Activated naive CD8-positive, alpha-beta T cell treated with anti-CD3 and anti-CD28 coated beads, Interleukin-2, amount 10 ng/mL, durations not matched to agents 7 days and 5 days (primary cell): ENCODE measurements at regions of chr4 and their contacts with region 1.

Region 1: DNA sequence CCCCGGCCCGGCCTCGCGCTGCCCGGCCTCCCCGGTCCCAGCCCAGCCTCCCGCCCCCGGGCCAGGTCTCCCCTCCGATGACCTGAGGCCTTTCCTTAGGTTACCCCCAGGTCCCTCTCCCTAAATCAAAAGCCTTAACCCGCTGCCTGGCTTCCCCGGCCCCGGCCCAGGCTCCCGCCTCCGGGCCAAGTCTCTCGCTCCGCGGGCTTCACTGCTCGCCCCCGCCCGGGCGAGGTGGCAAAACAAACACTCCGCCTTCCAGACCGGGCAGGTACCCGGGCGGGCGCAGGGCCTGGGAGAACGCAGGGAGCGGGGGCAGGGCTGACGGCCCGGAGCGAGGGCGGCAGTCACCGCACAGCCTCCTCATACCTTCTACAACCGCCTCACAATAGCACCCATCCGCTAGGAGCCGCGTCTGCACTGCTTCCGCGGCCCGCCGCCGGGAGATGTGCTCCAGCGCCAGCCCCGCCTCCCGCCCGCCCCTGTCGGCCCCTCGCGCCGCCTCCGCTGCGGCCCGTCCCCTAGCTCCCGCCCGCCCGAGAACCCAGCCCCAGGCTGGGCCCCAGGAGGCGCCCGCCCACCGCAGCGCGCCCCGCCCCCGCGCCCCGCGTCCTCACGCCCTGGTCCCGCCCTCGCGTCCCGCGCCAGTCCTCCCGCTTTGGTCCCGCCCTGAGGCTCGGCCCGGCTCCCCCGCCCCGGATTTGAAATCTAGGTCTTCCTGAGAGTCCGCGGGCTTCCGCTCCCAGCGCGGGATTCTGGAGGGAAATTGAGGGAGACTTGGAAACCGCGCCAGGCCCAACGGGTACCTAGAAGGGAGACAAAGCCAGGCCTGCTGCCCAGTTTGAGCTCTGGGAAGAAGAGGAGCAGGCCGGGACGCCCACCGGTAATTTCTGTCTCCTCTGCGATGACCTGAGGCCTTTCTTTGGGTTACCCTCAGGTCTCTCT is at the starts of genes CASP3 and PRIMPOL:
- DNase-seq: peak; percentile 99
- ATAC-seq: peak; percentile 89
- H3K4me3 Mint-ChIP-seq: peak within 1 kb of the TSS; percentile 98
- H3K27ac Mint-ChIP-seq: peak within 1 kb of the TSS; percentile 96
- H3K4me1 Mint-ChIP-seq: peaks cover 53% of the 10 kb centered on the region
- H3K27me3 Mint-ChIP-seq: no peaks in the 10 kb centered on the region
- total RNA-seq, gene CASP3: 45.3 to 49.8 TPM
- total RNA-seq, gene PRIMPOL: 22.5 to 25.0 TPM

Region 2: GRCh38 chr4:184417802-184418511 is 231.3 kb before region 1 on chr4:
- POLR2A ChIA-PET with region 1: interaction called, 12 read pairs
- DNase-seq: no peak
- ATAC-seq: peak; percentile 81
- H3K4me3 Mint-ChIP-seq: peak overlapping the region; percentile 88
- H3K27ac Mint-ChIP-seq: peak overlapping the region; percentile 99
- H3K4me1 Mint-ChIP-seq: peaks cover 60% of the 10 kb centered on the region
- H3K27me3 Mint-ChIP-seq: no peaks in the 10 kb centered on the region

Region 3: DNA sequence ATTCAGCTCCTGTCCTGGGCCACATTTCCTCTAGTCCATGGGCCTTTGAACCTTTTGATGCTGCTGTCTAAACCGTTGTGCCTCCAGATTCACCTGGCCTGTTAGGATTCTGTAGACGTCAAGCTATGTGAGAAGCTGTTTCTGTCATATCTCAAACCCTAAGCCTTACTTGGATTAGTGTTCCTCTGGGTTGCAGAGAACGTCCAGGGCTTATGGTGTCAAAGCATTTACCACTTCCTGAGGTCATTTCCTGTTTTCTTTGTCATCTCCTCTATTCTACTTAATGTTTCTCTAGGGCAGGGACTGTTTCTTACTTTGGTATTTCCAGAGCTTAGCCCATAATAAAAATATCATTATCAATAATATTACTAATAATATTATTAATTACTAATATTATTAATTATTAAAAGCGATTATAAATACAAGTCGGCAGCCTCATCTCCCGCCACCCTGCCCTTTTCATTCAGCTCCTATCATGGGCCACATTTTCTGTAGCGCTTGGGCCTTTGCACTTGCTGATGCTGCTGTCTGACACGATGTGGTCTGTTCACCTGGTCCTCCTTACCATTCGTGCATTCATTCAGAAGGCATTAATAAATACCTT is 19.3 kb after region 1 on chr4:
- POLR2A ChIA-PET with region 1: interaction called, 11 read pairs
- DNase-seq: no peak
- ATAC-seq: peak; percentile 90
- H3K4me3 Mint-ChIP-seq: peak overlapping the region; percentile 31
- H3K27ac Mint-ChIP-seq: peak overlapping the region; percentile 90
- H3K4me1 Mint-ChIP-seq: peaks cover 31% of the 10 kb centered on the region
- H3K27me3 Mint-ChIP-seq: no peaks in the 10 kb centered on the region

Region 4: DNA sequence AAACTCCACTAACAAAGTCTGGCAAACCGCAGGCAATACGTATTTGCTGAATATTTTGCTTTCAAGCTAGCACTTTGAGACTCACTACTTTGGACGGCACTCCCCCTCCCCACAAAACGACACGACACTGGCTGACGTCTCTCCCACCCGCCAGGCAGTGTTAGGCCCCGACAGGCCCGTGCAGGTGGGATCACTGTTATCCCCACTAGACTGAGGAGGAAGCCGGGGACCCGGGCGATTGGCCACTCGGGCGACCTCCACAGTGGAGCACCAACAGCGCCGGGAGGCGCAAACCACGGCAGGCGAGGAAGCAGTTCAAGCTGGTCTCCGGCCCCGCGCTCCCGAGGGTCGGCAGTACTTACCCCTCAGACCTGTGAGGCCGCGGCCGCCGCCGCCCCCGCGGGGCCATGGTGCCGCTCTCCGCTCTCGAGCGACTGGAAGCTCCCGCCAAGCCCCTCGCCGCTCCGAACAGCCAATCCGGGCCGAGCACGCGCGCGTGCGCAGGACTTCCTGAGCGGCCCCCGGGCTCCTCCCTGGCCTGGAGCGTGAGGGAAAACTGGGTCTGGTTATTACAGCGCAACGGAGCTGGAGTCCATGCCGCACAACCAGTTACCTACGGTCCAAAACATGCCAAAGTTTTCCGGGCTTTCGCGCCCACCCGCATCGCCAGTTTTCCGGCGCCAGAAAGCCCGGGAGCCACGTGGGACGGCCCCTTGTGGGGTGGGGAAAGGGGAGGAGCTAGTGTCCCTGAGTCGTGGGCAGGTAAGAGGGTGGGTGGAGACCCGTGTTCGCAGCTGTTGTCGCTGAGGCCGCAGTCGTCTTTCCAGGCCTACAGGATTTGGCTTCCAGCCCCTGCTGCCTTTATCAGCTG is 84.6 kb after region 1 on chr4 and contains the start of gene CENPU:
- POLR2A ChIA-PET with region 1: interaction called, 48 read pairs
- DNase-seq: peak; percentile 97
- ATAC-seq: peak; percentile 97
- H3K4me3 Mint-ChIP-seq: peak within 1 kb of the TSS; percentile 99
- H3K27ac Mint-ChIP-seq: peak within 1 kb of the TSS; percentile 96
- H3K4me1 Mint-ChIP-seq: peaks cover 28% of the 10 kb centered on the region
- H3K27me3 Mint-ChIP-seq: no peaks in the 10 kb centered on the region
- total RNA-seq, gene CENPU: 46.0 to 50.1 TPM